ENCODE measurements at regions of chr7 and their contacts with region 1.

Region 1: GRCh38 chr7:134553976-134554375 is 5.1 kb downstream of the AKR1B15 start:
- DNase-seq: peak; percentile 23
- H3K4me3 ChIP-seq: no peak overlapping the region
- H3K27ac ChIP-seq: no peak overlapping the region
- H3K4me1 ChIP-seq: no peaks in the 10 kb centered on the region
- H3K27me3 ChIP-seq: no peaks in the 10 kb centered on the region
- CTCF ChIP-seq: peak; percentile 9 to 61

Region 2: DNA sequence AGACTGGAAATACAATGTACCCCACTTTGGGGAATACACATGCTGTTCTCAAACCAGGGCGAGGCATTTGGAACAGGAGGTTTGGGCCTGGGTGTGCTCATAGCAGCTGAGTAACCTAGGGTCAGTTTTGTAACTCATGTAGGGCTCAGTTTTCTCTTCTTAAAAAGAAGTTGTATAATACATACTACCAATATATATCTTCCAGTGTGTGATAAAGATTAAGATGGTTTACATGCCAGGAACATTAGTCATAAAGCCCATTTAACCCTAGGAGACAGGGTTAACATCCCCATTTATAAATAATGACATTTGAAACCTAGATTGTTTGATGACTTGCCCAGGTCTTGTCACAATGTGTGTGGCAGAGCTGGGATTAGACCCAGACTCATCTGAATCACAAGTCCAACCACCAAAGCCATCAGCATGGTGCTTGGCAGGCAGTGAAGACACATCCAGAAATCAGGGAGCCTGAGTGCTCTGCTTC is 20.6 kb before region 1 on chr7:
- CTCF ChIA-PET with region 1: no interaction called
- dilution Hi-C with region 1: no loop called
- in situ Hi-C with region 1: no loop called
- intact Hi-C with region 1: no loop called
- DNase-seq: peak; percentile 21
- H3K4me3 ChIP-seq: no peak overlapping the region
- H3K27ac ChIP-seq: peak overlapping the region; percentile 63
- H3K4me1 ChIP-seq: peaks cover 31% of the 10 kb centered on the region
- H3K27me3 ChIP-seq: no peaks in the 10 kb centered on the region
- CTCF ChIP-seq: no peak

Region 3: DNA sequence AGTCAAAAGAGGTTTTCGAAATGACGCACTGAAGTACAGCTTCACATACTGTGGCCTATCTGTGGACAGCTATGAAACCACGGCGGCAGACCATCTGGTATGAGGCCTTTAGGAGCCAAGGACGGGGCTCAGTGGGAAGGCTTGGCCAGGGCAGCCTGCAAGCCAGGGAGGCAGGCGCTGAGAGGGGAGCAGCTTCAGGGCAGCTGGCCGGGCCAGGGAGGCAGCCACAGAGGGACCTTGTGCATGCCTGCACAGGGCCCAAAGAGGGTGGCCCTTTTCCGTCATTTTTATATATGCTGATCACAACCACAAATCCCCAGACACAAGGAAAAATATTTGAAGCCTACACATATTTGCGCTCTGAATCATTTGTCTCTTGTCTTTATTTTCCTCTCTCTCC is 239.0 kb after region 1 on chr7:
- CTCF ChIA-PET with region 1: no interaction called
- dilution Hi-C with region 1: no loop called
- in situ Hi-C with region 1: no loop called
- intact Hi-C with region 1: no loop called
- DNase-seq: no peak
- H3K4me3 ChIP-seq: no peak overlapping the region
- H3K27ac ChIP-seq: no peak overlapping the region
- H3K4me1 ChIP-seq: peaks cover 7% of the 10 kb centered on the region
- H3K27me3 ChIP-seq: no peaks in the 10 kb centered on the region
- CTCF ChIP-seq: no peak

Region 4: DNA sequence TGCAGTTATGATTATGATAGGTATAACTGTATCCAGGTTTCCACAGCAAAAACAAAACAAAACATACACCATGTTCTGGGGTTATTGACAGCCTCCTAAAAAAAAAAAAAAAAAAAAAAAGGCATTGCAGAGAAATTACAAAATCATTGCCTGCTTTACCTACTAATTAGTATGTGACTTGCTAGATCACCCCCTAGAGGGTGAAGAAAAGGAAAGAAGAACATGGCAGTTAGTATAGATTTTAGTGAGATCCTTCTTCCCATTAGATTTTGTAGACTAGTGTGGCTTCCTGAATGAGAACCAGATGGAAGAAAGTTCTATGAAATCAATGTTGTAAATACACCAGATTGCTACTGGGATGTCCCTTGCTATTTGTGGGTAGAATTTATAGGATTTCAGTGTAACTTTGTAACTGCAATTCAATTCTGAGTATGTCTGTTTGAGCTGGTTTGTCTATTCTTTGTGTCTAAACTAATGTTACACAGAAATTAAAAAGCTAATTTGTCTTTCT is 408.3 kb after region 1 on chr7:
- CTCF ChIA-PET with region 1: interaction called, 10 read pairs
- dilution Hi-C with region 1: no loop called
- in situ Hi-C with region 1: no loop called
- intact Hi-C with region 1: no loop called
- DNase-seq: no peak
- H3K4me3 ChIP-seq: no peak overlapping the region
- H3K27ac ChIP-seq: no peak overlapping the region
- H3K4me1 ChIP-seq: no peaks in the 10 kb centered on the region
- H3K27me3 ChIP-seq: no peaks in the 10 kb centered on the region
- CTCF ChIP-seq: no peak

Measured in mammary epithelial cell (primary cell).